Endothelial cell of umbilical vein (primary cell): ENCODE measurements at regions of chrX and their contacts with region 1.

Region 1: GRCh38 chrX:109536439-109537336 is at the start of gene NXT2:
- DNase-seq: peak; percentile 91
- H3K4me3 ChIP-seq: peak within 1 kb of the TSS; percentile 28 to 91 (median 74)
- H3K27ac ChIP-seq: peak within 1 kb of the TSS; percentile 89
- H3K4me1 ChIP-seq: peaks cover 12% of the 10 kb centered on the region
- H3K27me3 ChIP-seq: no peaks in the 10 kb centered on the region
- CTCF ChIP-seq: no peak
- POLR2A ChIP-seq: peak; percentile 85
- total RNA-seq, gene NXT2: 3.8 and 5.3 TPM in 2 replicates

Region 2: GRCh38 chrX:109347632-109348031 is 189.1 kb before region 1 on chrX:
- CTCF ChIA-PET with region 1: no interaction called
- POLR2A ChIA-PET with region 1: no interaction called
- dilution Hi-C with region 1: no loop called
- intact Hi-C with region 1: loop called (anchors 10 kb)
- DNase-seq: peak; percentile 72
- H3K4me3 ChIP-seq: no peak overlapping the region
- H3K27ac ChIP-seq: peak overlapping the region; percentile 3
- H3K4me1 ChIP-seq: peaks cover 28% of the 10 kb centered on the region
- H3K27me3 ChIP-seq: no peaks in the 10 kb centered on the region
- CTCF ChIP-seq: no peak
- POLR2A ChIP-seq: no peak

Region 3: GRCh38 chrX:109485470-109486340 is 51.0 kb before region 1 on chrX:
- CTCF ChIA-PET with region 1: interaction called, 13 read pairs
- POLR2A ChIA-PET with region 1: no interaction called
- dilution Hi-C with region 1: no loop called
- intact Hi-C with region 1: loop called (anchors 5 kb)
- DNase-seq: peak; percentile 77
- H3K4me3 ChIP-seq: no peak overlapping the region
- H3K27ac ChIP-seq: no peak overlapping the region
- H3K4me1 ChIP-seq: no peaks in the 10 kb centered on the region
- H3K27me3 ChIP-seq: peaks cover 5 to 6% of the 10 kb centered on the region in 2 experiments
- CTCF ChIP-seq: peak; percentile 71 to 83
- POLR2A ChIP-seq: no peak

Region 4: GRCh38 chrX:109635176-109635575 is 98.5 kb after region 1 on chrX:
- CTCF ChIA-PET with region 1: interaction called, 8 read pairs
- POLR2A ChIA-PET with region 1: no interaction called
- dilution Hi-C with region 1: no loop called
- intact Hi-C with region 1: loop called (anchors 2 kb)
- DNase-seq: peak; percentile 31
- H3K4me3 ChIP-seq: no peak overlapping the region
- H3K27ac ChIP-seq: no peak overlapping the region
- H3K4me1 ChIP-seq: no peaks in the 10 kb centered on the region
- H3K27me3 ChIP-seq: no peaks in the 10 kb centered on the region
- CTCF ChIP-seq: peak; percentile 32 to 48
- POLR2A ChIP-seq: no peak

Region 5: GRCh38 chrX:109732780-109733657 is 196.3 kb after region 1 on chrX and contains the start of gene ACSL4:
- CTCF ChIA-PET with region 1: no interaction called
- POLR2A ChIA-PET with region 1: no interaction called
- dilution Hi-C with region 1: no loop called
- intact Hi-C with region 1: loop called (anchors 10 kb)
- DNase-seq: peak; percentile 82
- H3K4me3 ChIP-seq: peak within 1 kb of the TSS; percentile 58 to 86 (median 70)
- H3K27ac ChIP-seq: peak within 1 kb of the TSS; percentile 89
- H3K4me1 ChIP-seq: peaks cover 26% of the 10 kb centered on the region
- H3K27me3 ChIP-seq: no peaks in the 10 kb centered on the region
- CTCF ChIP-seq: no peak
- POLR2A ChIP-seq: peak; percentile 83
- total RNA-seq, gene ACSL4: 85.5 and 88.9 TPM in 2 replicates

Region 6: DNA sequence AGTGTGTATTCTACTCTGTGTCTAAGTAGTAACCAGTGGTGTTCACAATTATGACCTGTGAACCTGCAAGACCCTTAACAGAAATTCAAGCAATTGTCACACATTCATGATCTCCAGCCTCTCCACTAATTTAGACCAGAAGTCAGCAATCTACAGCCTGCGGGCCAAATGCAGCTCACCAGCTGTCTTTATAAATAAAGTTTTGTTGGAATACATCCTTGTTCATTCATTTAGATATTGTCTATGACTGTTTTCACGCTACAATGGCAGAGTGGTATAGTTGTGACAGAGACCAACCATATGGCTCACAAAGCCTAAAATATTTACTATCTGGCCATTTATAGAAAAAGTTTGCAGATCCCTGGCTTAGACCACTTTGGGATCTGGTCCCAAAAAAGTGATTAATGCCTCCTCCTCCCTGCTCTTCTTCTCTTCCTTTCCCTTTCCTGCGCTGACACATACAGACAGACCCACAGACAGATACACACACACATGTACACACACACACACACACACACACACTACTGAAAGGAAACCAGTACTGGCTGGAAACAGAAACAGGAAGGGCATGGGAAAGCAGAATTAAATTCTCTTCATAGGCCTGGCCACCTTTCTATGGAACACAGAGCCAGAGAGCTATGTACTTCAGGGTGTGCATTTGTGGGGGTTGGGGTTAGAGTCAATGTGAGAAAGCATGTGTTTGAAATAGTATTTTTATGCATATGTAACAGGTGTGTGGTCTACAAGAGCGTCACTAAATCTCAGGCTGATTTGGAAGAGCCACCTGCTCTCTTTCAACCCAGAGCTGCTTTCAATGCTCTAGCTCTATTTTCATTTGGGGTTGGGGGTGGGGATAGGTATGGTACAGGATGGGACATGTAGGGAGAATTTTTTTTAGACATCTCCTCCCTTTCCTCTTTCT is 416.6 kb after region 1 on chrX:
- CTCF ChIA-PET with region 1: no interaction called
- POLR2A ChIA-PET with region 1: no interaction called
- dilution Hi-C with region 1: no loop called
- intact Hi-C with region 1: loop called (anchors 5 kb)
- DNase-seq: peak; percentile 27
- H3K4me3 ChIP-seq: no peak overlapping the region
- H3K27ac ChIP-seq: peak overlapping the region; percentile 67
- H3K4me1 ChIP-seq: peaks cover 23% of the 10 kb centered on the region
- H3K27me3 ChIP-seq: no peaks in the 10 kb centered on the region
- CTCF ChIP-seq: no peak
- POLR2A ChIP-seq: no peak